ENCODE measurements at regions of chr6 and their contacts with region 1.

Region 1: GRCh38 chr6:20212392-20213217 is at the start of gene MBOAT1:
- DNase-seq: peak; percentile 92 to 95
- ATAC-seq: peak; percentile 97 to 100 (median 98)
- H3K4me3 ChIP-seq: peak within 1 kb of the TSS; percentile 68 to 96 (median 87)
- H3K27ac ChIP-seq: peak within 1 kb of the TSS; percentile 66 to 94 (median 91)
- H3K4me1 ChIP-seq: peaks cover 2 to 56% (median 32%) of the 10 kb centered on the region in 9 donors
- H3K27me3 ChIP-seq: no peaks in the 10 kb centered on the region
- CTCF ChIP-seq: peak in 4 of 9 donors; percentile 20 to 53 (median 50)
- total RNA-seq, gene MBOAT1: 1.9 to 7.9 (median 3.9) TPM

Region 2: DNA sequence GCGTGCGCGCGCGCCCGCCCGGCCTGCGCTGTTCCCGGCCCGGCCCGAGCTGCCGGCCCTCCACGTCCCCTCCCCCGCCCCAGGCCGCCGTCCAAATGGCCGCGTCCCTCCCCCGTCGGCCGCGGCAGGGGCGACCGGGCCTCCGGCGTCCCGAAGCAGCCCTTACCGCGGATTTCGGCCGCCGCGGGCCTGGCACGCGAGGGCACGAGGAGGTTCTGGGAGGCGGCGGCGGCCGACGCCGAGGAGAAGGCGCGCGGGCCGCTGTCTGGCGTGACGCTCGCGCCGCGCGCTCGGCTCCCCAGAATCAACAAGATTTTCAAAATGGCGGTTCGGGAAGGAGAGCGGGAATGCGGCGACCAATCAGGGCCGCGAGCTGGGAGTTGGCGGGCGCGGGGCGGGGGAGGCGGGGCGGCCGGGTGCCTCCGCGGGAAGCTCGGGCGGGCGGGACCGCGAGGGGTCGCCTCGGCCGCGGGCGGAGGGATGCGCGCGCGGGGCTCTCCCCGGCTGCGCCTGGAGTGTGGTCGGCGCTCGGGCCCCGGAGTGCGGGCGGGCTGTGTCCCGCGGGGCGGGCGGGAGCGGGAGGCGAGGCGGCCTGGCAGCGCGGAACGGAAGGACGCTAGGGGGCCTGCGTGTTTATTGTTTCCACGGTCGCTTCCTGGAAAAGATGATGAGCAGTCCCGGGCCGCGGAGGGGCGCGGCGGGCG is 1948.2 kb before region 1 on chr6 and contains the start of gene DEK:
- intact Hi-C with region 1: loop called in 1 of 10 experiments (anchors 5 kb)
- DNase-seq: peak; percentile 89 to 90
- ATAC-seq: peak; percentile 77 to 92 (median 88)
- H3K4me3 ChIP-seq: peak within 1 kb of the TSS; percentile 74 to 95 (median 90)
- H3K27ac ChIP-seq: peak within 1 kb of the TSS; percentile 89 to 98 (median 94)
- H3K4me1 ChIP-seq: peaks cover 0 to 45% (median 38%) of the 10 kb centered on the region in 9 donors
- H3K27me3 ChIP-seq: no peaks in the 10 kb centered on the region
- CTCF ChIP-seq: peak; percentile 36 to 78 (median 62)
- total RNA-seq, gene DEK: 38.6 to 78.3 (median 55.6) TPM

Region 3: DNA sequence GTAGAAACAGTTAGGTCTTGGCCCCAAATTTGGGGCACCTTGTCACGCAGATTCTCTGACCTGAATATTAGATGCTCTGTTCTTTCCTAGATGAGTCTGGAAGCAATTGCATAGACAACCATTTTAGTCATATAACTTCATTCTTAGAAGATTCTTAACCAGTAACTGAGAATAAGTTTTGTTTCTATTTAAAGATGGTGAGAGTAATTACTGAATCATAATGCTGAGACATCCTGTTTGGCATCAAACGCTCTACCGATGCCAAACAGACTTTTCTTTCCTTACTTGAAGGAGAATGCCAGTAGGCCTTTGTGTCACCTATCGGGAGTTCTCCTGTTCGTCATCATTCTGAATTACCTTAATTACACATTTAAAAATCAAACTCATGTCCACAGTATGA is 507.0 kb before region 1 on chr6:
- intact Hi-C with region 1: no loop called
- DNase-seq: no peak
- ATAC-seq: no peak
- H3K4me3 ChIP-seq: no peak overlapping the region
- H3K27ac ChIP-seq: no peak overlapping the region
- H3K4me1 ChIP-seq: no peaks in the 10 kb centered on the region
- H3K27me3 ChIP-seq: no peaks in the 10 kb centered on the region
- CTCF ChIP-seq: no peak

Region 4: DNA sequence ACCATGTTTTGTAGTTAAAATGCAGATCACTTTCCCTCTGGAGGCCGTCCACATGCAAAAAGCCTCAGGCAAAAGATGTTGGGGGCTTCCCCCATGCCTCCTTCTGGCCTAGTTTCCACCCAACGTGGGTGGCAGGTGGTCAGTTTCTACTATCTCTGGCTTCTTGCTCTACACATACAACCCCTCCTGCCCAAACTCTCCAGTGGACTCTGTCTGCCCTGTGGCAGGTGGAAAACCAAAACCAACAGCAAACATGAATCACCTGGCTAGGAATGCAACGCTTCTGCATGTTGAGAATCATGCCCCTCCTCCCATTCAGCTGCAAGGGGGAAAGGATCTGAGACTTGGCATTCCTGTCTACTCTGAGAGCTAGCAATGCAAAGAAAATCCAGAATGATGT is 95.1 kb before region 1 on chr6:
- intact Hi-C with region 1: loop called in 2 of 10 experiments (anchors 5 to 10 kb)
- DNase-seq: no peak
- ATAC-seq: no peak
- H3K4me3 ChIP-seq: no peak overlapping the region
- H3K27ac ChIP-seq: no peak overlapping the region
- H3K4me1 ChIP-seq: peaks cover 0 to 23% (median 0%) of the 10 kb centered on the region in 9 donors
- H3K27me3 ChIP-seq: no peaks in the 10 kb centered on the region
- CTCF ChIP-seq: no peak

Region 5: GRCh38 chr6:20126789-20127653 is 85.6 kb before region 1 on chr6:
- intact Hi-C with region 1: loop called in 7 of 10 experiments (anchors 2 to 10 kb)
- DNase-seq: peak; percentile 51 to 76
- ATAC-seq: peak; percentile 74 to 96 (median 92)
- H3K4me3 ChIP-seq: no peak overlapping the region
- H3K27ac ChIP-seq: peak overlapping the region in 3 of 10 donors; percentile 8 to 36 (median 10)
- H3K4me1 ChIP-seq: peaks cover 0 to 26% (median 10%) of the 10 kb centered on the region in 9 donors
- H3K27me3 ChIP-seq: no peaks in the 10 kb centered on the region
- CTCF ChIP-seq: peak; percentile 81 to 97 (median 93)

Region 6: DNA sequence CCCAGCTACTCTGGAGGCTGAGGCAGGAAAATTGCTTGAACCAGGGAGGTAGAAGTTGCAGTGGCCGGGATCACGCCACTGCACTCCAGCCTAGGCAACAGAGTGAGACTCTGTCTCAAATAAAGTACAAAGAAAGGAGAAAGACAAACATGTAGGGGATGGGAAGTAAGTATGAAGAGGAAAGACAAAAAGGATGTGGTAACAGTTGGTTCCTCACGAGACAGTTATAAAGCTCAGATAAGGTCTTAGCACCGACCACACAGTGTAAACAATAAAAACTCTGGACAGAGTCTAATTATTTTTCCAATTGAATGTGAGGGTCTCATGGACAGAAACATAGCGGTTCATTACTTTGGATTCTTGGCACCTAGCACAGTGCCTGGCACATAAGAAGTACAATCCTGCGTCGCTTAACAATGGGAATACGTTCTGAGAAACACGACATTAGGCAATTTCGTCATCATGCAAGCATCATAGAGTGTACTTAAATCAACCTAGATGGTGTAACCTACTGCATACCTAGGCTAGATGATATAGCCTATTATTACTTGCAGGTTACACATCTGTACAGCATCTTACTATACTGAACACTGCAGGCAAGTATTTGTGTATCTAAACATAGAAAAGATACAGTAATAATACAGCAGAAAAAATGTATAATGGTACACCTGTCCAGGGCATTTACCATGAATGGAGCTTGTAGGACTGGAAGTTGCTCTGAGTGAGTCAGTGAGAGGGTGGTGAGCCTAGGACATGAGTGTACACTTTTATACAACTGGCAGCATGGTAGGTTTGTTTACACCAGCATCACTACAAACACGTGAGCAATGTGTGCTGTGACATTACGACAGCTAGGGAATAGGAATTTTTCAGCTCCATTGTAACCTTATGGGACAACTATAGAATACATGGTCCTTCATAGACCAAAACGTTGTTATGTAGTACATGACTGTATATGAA is 38.5 kb before region 1 on chr6:
- intact Hi-C with region 1: loop called in 3 of 10 experiments (anchors 5 kb)
- DNase-seq: no peak
- ATAC-seq: peak in 3 of 8 donors; percentile 21 to 40 (median 30)
- H3K4me3 ChIP-seq: no peak overlapping the region
- H3K27ac ChIP-seq: peak overlapping the region in 2 of 10 donors; percentile 29 to 60
- H3K4me1 ChIP-seq: peaks cover 0 to 49% (median 11%) of the 10 kb centered on the region in 9 donors
- H3K27me3 ChIP-seq: no peaks in the 10 kb centered on the region
- CTCF ChIP-seq: no peak

Region 7: GRCh38 chr6:20183030-20183437 is 29.6 kb before region 1 on chr6:
- intact Hi-C with region 1: loop called in 2 of 10 experiments (anchors 2 to 5 kb)
- DNase-seq: peak; percentile 32 to 59
- ATAC-seq: peak in 6 of 8 donors; percentile 51 to 81 (median 70)
- H3K4me3 ChIP-seq: no peak overlapping the region
- H3K27ac ChIP-seq: peak overlapping the region in 4 of 10 donors; percentile 6 to 58 (median 23)
- H3K4me1 ChIP-seq: peaks cover 0 to 29% (median 14%) of the 10 kb centered on the region in 9 donors
- H3K27me3 ChIP-seq: no peaks in the 10 kb centered on the region
- CTCF ChIP-seq: no peak

Region 8: DNA sequence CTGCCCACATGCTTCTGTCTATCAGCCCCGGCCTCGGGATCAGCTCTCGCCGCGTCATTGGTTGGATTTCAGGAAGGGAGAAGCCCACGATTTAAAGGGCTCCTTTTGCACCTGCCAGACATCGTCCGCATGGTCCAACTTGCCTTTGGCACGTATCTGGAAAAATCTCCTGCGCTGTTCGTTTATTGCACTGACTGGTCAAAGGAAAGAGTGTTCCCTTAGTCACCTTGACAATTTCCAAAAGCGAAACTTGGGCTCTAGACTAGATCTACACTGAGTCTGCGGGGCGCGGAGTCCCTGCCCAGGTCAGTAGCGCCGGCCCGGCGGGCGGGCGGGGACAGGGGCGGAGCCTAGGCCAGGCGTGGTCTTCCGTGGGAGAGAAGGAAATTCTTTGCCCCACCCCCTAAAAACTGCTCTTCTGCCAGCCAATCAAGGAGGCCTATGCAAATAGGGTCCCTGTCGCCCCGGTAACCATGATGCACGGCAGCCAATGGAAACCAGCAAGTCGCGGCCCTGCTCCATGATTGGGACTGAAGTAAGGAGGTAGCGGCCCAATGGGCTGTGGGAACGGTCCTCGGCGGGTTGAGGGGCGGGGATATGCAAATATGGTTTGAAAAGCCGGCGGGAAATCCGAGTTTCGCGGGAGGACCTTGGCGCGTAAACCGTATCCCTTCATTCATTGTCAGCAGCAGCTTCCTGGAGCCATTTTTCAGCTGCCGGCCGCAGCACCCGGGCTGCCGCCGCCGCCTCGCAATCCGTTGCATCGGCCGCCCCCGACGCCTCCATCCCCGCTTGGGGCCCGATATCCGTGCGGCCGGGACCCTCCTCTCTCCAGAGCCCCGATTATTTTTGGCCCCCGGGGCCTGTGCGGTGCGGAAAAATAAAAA is 188.8 kb after region 1 on chr6 and contains the start of gene E2F3:
- intact Hi-C with region 1: loop called in 5 of 10 experiments (anchors 2 to 10 kb)
- DNase-seq: peak; percentile 98 to 100
- ATAC-seq: peak; percentile 93 to 97 (median 96)
- H3K4me3 ChIP-seq: peak within 1 kb of the TSS; percentile 50 to 90 (median 76)
- H3K27ac ChIP-seq: peak within 1 kb of the TSS; percentile 55 to 98 (median 91)
- H3K4me1 ChIP-seq: peaks cover 0 to 28% (median 9%) of the 10 kb centered on the region in 9 donors
- H3K27me3 ChIP-seq: no peaks in the 10 kb centered on the region
- CTCF ChIP-seq: no peak
- total RNA-seq, gene E2F3: 6.1 to 11.9 (median 8.1) TPM